HepG2 (cell line): ENCODE measurements at regions of chr20 and their contacts with region 1.

Region 1: DNA sequence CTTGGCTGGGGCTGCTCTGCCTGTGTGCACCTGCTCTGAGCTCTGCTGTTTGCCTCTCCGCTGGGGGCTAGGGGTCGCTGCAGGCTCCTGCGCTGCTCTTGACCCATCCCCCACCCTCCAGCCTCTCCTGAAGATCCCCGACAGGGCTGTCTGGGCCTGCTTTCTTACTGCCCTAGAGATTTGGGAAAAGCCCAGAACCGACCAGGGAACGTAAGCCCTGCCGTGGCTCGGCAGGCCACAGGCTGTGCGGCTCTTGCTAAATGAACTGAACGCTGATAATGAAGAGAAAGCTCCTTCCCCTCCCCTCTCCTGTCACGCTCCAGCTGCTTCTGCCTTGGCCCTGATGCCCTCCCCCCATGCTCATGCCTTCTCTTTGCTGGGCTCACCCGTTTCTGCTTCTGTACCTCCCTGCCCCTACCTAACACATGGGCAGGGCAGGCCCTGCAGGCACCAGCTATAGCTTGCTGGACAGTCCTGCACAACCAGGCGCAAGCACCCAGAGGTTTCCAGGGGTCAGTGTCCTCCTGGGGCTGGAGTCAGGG is 32.0 kb upstream of the PCMTD2 start:
- DNase-seq: peak; percentile 67
- ATAC-seq: peak; percentile 85
- H3K4me3 ChIP-seq: peak overlapping the region in 2 of 3 experiments; percentile 3 to 58; a peak in 1 of 6 replicates
- H3K27ac ChIP-seq: no peak overlapping the region
- H3K4me1 ChIP-seq: peaks cover 55% of the 10 kb centered on the region
- H3K27me3 ChIP-seq: peaks cover 26 to 86% of the 10 kb centered on the region in 2 experiments
- CTCF ChIP-seq: peak; percentile 98
- EP300 ChIP-seq: peak in 1 of 2 experiments; percentile 30; a peak in 1 of 4 replicates
- POLR2A ChIP-seq: no peak
- RAD21 ChIP-seq: peak; percentile 96

Region 2: DNA sequence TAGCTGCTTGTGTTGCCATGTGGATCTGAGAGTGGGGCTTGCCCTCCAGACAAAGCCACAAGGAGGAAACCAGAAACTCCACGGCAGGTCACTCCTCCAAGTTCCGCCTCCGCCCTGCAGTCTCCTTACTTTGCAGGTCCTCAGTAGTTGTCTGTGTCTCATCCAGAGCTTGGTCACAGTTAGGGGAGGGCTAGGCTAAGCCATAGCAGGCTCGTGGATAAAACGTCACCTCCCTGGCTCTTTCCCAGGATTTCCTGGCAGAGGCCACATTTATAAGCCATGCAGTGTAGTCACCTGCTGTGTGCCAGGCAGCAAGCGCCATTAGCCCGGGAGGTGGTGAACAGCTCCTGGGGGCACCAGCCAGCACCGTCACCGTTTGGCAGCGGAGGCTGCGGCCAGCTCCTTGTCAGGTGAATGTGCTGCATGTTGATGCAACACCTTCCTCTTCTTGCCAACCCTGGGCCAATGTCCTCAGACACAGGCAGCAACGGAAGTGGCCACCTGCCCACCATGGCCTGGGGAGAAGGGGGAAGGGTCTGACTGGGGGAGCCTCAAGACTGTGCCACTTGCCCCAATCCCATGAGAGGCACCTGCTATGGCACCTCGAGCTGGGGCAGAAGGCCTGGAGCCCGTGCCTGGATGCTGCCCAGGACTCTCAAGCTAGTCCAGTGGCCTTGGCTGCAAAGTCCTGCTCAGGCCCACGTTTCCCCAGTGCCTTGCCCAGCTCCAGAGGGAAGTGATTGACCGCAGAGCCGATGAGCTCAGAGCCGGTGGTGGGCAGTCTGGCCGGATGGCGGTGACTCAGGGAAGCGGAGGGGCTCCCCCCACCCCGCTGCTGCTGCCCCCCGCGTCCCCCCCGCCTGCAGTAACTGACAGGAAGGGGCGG is 1620.3 kb before region 1 on chr20:
- CTCF ChIA-PET with region 1: no interaction called
- POLR2A ChIA-PET with region 1: no interaction called
- in situ Hi-C with region 1: no loop called
- intact Hi-C with region 1: no loop called
- DNase-seq: no peak
- ATAC-seq: peak; percentile 8; the same call in 2 of the 3 replicates
- H3K4me3 ChIP-seq: no peak overlapping the region
- H3K27ac ChIP-seq: no peak overlapping the region
- H3K4me1 ChIP-seq: peaks cover 11% of the 10 kb centered on the region
- H3K27me3 ChIP-seq: peaks cover 36 to 94% of the 10 kb centered on the region in 2 experiments
- CTCF ChIP-seq: no peak
- EP300 ChIP-seq: no peak
- POLR2A ChIP-seq: no peak
- RAD21 ChIP-seq: no peak

Region 3: GRCh38 chr20:64188682-64189529 is 34.7 kb before region 1 on chr20:
- CTCF ChIA-PET with region 1: no interaction called
- POLR2A ChIA-PET with region 1: interaction called, 11 read pairs
- in situ Hi-C with region 1: no loop called
- intact Hi-C with region 1: no loop called
- DNase-seq: peak; percentile 100
- ATAC-seq: peak; percentile 91
- H3K4me3 ChIP-seq: peak overlapping the region in 1 of 3 experiments; percentile 64; a peak in 2 of 6 replicates
- H3K27ac ChIP-seq: peak overlapping the region; percentile 88
- H3K4me1 ChIP-seq: peaks cover 45% of the 10 kb centered on the region
- H3K27me3 ChIP-seq: peaks cover 3 to 6% of the 10 kb centered on the region in 2 experiments; a peak in 1 of 5 replicates
- CTCF ChIP-seq: no peak; the same call in 1 of the 2 replicates
- EP300 ChIP-seq: peak; percentile 65 to 79; a peak in 3 of 4 replicates
- POLR2A ChIP-seq: no peak
- RAD21 ChIP-seq: no peak

Region 4: DNA sequence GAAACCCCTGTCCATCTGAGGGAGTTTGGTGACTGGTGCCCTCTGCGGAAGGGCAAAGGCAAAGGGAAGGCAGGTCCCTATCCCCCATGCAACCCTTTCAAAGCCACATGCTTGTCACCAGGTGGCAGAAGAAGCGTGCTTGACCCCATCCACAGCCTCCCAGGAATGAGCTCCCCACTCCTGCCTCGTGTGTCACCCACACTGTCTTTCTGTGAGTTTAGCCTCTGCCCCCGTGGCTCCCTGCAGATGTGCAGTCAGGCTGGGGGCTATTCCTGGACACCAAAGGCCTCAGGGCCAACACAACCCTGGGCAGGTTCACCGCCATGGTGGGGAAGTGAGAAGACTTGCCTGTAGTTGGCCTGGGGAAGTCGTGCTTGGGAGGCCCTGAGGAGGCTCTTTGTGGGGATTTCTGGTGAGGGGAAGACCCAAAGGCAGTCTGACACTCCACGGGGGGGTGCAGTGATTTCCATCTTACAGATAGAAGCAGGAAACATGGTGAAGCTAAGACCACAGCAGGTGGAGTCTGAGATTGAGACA is 15.3 kb after region 1 on chr20:
- CTCF ChIA-PET with region 1: no interaction called
- POLR2A ChIA-PET with region 1: interaction called, 9 read pairs
- in situ Hi-C with region 1: no loop called
- intact Hi-C with region 1: loop called (anchors 2 kb)
- DNase-seq: peak; percentile 49
- ATAC-seq: peak; percentile 4; the same call in 2 of the 3 replicates
- H3K4me3 ChIP-seq: peak overlapping the region in 1 of 3 experiments; percentile 19; a peak in 2 of 6 replicates
- H3K27ac ChIP-seq: peak overlapping the region; percentile 69
- H3K4me1 ChIP-seq: peaks cover 90% of the 10 kb centered on the region
- H3K27me3 ChIP-seq: no peaks in the 10 kb centered on the region
- CTCF ChIP-seq: peak; percentile 71
- EP300 ChIP-seq: no peak
- POLR2A ChIP-seq: no peak
- RAD21 ChIP-seq: no peak

Region 5: GRCh38 chr20:64279826-64280459 is 56.3 kb after region 1 on chr20:
- CTCF ChIA-PET with region 1: interaction called, 34 read pairs
- POLR2A ChIA-PET with region 1: no interaction called
- in situ Hi-C with region 1: no loop called
- intact Hi-C with region 1: no loop called
- DNase-seq: no peak
- ATAC-seq: peak; percentile 42
- H3K4me3 ChIP-seq: no peak overlapping the region
- H3K27ac ChIP-seq: no peak overlapping the region
- H3K4me1 ChIP-seq: no peaks in the 10 kb centered on the region
- H3K27me3 ChIP-seq: no peaks in the 10 kb centered on the region
- CTCF ChIP-seq: no peak
- EP300 ChIP-seq: no peak
- POLR2A ChIP-seq: no peak
- RAD21 ChIP-seq: no peak